HEK293T (cell line): ENCODE measurements at regions of chr9 and their contacts with region 1.

Region 1: DNA sequence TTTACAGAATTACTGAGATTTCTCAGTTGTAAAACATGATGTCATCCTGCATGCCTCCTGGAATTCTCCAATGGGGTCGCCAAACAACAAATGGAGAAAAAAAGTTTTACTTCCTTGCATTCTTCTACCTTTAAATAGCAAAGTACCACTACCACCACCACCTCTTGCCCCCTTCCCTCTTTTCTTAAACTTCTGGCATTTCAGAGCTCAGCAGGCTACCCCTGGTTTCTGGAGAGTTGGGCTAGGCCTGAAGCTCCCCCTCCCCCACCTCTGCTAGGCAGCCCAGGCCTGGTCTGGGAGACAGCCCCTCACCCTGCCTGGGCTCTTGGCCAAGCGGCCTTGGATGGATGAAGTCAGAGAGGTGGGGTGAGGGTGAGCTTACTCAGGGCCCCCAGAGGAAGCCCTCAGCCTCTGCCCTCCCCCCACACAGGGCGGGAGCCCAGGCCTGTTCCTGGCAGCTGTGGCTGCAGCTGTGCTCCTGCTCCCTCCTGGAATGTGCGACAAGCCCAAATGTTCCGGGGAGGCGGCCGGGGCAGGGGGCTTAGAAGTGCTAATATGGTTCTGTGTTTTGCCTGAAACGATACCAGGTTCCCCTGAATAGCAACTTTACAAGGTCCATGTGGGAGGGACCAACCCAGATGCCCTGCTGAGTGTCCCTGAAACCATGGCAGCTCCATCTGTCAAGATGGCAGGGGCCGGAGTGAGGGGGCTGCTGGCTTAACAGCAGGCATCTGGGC is 6.0 kb upstream of the CCIN start:
- DNase-seq: no peak

Region 2: GRCh38 chr9:36064448-36065037 is 98.7 kb before region 1 on chr9:
- CTCF ChIA-PET with region 1: no interaction called
- POLR2A ChIA-PET with region 1: no interaction called
- DNase-seq: no peak

Region 3: GRCh38 chr9:36102742-36103495 is 60.3 kb before region 1 on chr9:
- CTCF ChIA-PET with region 1: interaction called, 11 read pairs
- POLR2A ChIA-PET with region 1: no interaction called
- DNase-seq: peak; percentile 73

Region 4: DNA sequence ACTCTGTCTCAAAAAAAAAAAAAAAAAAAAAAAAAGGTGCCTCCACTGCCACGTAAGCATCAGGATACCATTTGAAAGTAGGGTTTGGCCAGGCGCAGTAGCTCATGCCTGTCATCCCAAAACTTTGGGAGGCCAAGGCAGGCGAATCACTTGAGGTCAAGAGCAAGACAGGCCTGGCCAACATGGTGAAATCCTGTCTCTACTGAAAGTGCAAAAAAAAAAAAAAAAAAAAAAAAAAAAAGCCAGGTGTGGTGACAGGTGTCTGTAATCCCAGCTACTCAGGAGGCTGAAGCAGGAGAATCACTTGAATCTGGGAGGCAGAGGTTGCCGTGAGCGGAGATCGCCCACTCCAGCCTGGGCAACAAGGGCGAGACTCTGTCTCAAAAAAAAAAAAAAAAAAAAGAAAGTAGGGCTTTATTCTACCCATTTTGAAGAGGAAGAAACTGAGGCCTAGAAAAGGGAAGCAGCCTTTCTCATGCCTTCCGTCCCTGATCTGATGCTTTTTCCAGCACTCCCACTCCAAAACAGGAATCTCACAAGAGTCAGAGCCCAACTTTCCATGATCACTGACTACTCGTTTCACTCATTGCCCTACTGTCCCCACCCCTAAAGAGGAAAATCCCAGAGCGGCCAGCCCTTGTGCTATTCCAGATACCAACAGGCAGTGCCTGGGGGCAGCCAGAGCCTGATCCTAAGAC is 10.3 kb before region 1 on chr9:
- CTCF ChIA-PET with region 1: no interaction called
- POLR2A ChIA-PET with region 1: no interaction called
- DNase-seq: no peak

Region 5: GRCh38 chr9:36174731-36175130 is 11.5 kb after region 1 on chr9:
- CTCF ChIA-PET with region 1: no interaction called
- POLR2A ChIA-PET with region 1: no interaction called
- DNase-seq: no peak

Region 6: GRCh38 chr9:36207016-36207415 is 43.8 kb after region 1 on chr9:
- CTCF ChIA-PET with region 1: no interaction called
- POLR2A ChIA-PET with region 1: no interaction called
- DNase-seq: no peak